ENCODE measurements at regions of chr1 and their contacts with region 1.

Region 1: DNA sequence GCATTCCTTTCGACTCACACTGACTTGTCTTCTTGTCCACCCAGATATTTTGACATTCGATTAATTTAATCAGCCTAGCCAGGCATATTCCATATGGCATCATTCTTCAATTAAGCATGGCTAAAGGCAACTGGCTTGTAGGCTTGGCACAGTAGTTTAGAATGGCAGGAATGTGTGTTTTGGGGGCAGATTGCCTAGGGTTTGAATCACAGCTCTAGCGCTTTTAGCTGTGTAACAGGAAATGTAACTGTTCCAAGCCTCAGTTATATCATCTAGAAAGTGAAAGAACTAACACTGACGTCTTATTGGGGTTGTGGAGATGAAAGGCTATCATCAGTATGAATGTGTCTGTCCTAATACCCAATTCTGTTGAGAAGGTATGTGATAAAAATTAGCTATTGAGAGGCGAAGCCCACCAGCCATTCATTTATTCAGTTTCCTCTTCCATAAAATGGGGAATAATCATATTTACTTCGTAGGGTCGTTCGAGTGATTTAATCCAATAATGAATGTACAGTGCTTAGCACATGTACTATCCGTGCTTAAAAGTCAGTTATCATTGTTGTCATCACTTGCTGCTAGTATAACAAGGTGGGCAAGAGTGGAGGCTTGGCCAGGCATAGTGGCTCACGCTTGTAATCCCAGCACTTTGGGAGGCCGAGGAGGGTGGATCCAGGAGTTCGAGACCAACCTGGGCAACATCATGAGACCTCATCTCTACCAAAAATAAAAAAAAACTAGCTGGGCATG is 41.6 kb upstream of the GRHL3 start:
- DNase-seq: peak; percentile 40
- H3K4me3 Mint-ChIP-seq: no peak overlapping the region
- H3K27ac Mint-ChIP-seq: peak overlapping the region; percentile 20
- H3K4me1 Mint-ChIP-seq: peaks cover 9% of the 10 kb centered on the region
- H3K27me3 Mint-ChIP-seq: peaks cover 20% of the 10 kb centered on the region

Region 2: GRCh38 chr1:24289937-24290595 is 12.5 kb after region 1 on chr1:
- CTCF ChIA-PET with region 1: no interaction called
- POLR2A ChIA-PET with region 1: no interaction called
- intact Hi-C with region 1: no loop called
- DNase-seq: no peak
- H3K4me3 Mint-ChIP-seq: no peak overlapping the region
- H3K27ac Mint-ChIP-seq: no peak overlapping the region
- H3K4me1 Mint-ChIP-seq: no peaks in the 10 kb centered on the region
- H3K27me3 Mint-ChIP-seq: no peaks in the 10 kb centered on the region

Region 3: GRCh38 chr1:24308365-24309015 is 30.9 kb after region 1 on chr1:
- CTCF ChIA-PET with region 1: no interaction called
- POLR2A ChIA-PET with region 1: no interaction called
- intact Hi-C with region 1: loop called (anchors 1 kb)
- DNase-seq: no peak
- H3K4me3 Mint-ChIP-seq: no peak overlapping the region
- H3K27ac Mint-ChIP-seq: no peak overlapping the region
- H3K4me1 Mint-ChIP-seq: peaks cover 3% of the 10 kb centered on the region
- H3K27me3 Mint-ChIP-seq: peaks cover 4% of the 10 kb centered on the region

Region 4: GRCh38 chr1:24594154-24594553 is 316.6 kb after region 1 on chr1:
- CTCF ChIA-PET with region 1: no interaction called
- POLR2A ChIA-PET with region 1: no interaction called
- intact Hi-C with region 1: no loop called
- DNase-seq: no peak
- H3K4me3 Mint-ChIP-seq: no peak overlapping the region
- H3K27ac Mint-ChIP-seq: no peak overlapping the region
- H3K4me1 Mint-ChIP-seq: no peaks in the 10 kb centered on the region
- H3K27me3 Mint-ChIP-seq: peaks cover 18% of the 10 kb centered on the region

Measured in activated CD4-positive, alpha-beta memory T cell treated with anti-CD3 and anti-CD28 coated beads for 36 hours (primary cell).